ENCODE measurements at regions of chr4 and their contacts with region 1.

Region 1: DNA sequence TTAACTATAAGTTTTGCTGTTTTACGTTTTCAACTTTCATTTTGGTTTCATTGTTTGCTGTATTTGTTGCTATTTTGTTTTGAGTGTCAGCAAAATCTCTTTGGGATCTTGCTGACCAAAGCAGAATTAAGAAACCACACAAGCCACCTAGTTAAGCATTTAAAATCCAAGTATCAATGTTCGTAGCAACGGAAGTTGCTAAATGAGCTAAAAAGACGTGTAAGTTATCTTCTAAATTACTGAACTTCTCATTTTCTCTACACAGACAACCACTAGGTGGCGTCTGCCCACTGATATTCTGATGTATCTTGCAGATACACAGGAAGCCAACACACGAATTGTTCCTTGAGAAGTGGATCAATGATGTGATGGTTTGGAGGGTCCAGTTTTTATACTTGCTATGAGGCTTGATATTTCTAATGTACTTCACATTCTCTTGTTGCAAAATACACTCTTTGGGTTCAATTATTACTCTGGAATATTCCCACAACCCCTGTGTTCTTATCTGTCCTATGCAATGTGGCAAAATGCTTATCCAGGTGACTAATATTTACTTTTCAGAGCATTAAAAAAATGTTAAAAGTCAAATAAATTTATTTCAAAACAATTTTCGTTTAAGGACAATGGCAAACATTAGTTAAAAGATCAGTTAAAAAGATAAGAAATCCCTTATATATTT is 250.5 kb downstream of the TECRL start:
- DNase-seq: peak; percentile 62
- H3K4me3 ChIP-seq: peak overlapping the region; percentile 18
- CTCF ChIP-seq: peak; percentile 76

Region 2: DNA sequence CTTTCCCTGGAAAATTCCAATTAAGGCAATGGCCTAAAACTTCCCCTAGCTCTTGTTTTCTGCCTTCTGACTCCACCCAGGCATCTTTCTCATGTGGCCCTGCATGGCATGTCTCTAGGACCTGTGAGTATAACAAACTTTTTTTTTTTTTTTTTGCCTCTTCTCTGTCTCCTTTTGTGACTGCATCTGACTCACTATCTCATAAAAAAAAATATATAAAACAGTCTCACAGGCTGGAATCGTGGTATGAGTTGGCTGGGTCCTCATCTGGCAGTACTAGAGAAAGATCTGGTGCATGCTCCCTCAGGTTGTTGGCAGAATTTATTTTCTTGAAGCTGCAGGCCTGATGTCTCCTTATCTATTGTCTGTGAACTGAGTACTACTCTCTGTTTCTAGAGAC is 63.4 kb before region 1 on chr4:
- in situ Hi-C with region 1: no loop called
- DNase-seq: no peak
- H3K4me3 ChIP-seq: no peak overlapping the region
- CTCF ChIP-seq: no peak

Region 3: DNA sequence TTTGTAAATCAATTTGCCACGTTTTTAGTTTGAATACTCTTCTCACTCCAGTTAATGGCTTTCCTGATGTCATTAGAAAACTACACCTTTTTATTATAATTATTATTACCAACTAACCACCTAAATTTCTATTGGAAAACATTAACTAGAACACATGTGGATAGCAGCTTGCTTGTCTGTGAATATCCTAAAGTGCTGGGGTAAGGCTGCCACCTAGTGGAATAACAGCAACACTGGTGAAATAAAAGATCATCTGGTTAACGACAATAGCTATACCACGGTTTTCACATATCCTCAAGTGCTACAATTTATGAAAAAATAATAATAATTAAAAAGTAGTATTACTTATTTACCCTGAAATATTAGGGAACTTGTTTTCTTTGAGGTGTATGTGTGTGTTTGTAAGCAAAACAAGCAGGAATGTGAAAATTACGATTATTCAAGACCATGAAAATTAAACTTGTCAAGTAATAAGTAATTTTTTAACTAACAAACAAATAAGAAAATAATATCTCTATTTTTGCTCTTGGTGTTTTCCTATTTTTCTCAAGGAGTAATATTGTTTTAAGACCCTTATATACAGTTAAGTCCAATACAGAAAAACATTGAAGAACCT is 380.6 kb after region 1 on chr4:
- in situ Hi-C with region 1: loop called (anchors 25 kb)
- DNase-seq: peak; percentile 57
- H3K4me3 ChIP-seq: no peak overlapping the region
- CTCF ChIP-seq: peak; percentile 81

Measured in astrocyte of the cerebellum (primary cell).